ENCODE measurements at regions of chr10 and their contacts with region 1.

Region 1: DNA sequence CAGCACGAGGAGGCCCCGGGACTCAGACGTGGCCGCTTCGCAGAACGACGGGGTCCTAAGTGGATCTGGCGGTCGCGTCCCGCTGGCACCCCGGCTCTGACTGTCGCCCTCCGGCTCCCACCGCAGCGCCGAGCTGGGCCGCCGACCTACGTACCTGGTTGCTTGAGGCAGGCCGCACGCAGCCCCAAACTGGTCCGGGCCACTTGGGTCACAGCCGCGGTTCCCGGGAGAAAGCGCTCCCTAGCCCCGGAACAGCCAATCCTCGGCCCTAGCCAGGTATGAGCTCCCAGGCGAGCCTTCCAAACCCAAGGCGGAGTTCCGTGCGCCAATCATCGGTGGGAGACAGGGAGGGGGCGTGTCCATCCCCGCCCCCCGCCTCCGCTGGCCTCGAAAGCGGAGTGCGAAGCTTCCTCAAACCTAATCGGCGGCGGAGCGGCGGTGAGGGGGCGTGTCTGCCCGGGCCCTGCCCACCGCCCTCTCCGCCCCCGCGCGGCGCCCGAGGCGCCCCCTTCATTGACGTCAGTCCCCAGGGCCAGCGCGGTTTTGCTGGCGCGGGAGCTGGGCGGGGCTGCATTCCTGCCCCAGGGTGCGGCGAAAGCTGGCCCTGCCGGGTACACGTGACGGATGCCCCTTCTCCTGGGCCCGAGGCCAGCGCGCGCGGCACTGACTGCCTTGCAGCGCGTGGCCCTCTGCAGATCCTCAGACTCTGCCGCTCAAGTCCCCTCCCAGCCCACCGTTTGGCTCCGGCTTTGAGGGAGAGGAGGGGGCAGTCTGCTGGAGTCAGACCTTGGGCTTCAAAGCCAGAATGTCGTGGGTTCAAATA is at the start of gene AVPI1:
- DNase-seq: peak; percentile 97
- ATAC-seq: peak; percentile 93
- H3K4me3 Mint-ChIP-seq: peak within 1 kb of the TSS; percentile 81
- H3K27ac Mint-ChIP-seq: peak within 1 kb of the TSS; percentile 69
- H3K4me1 Mint-ChIP-seq: peaks cover 22% of the 10 kb centered on the region
- H3K27me3 Mint-ChIP-seq: no peaks in the 10 kb centered on the region
- CTCF ChIP-seq: no peak
- total RNA-seq, gene AVPI1: 2.5 to 3.0 TPM

Region 2: DNA sequence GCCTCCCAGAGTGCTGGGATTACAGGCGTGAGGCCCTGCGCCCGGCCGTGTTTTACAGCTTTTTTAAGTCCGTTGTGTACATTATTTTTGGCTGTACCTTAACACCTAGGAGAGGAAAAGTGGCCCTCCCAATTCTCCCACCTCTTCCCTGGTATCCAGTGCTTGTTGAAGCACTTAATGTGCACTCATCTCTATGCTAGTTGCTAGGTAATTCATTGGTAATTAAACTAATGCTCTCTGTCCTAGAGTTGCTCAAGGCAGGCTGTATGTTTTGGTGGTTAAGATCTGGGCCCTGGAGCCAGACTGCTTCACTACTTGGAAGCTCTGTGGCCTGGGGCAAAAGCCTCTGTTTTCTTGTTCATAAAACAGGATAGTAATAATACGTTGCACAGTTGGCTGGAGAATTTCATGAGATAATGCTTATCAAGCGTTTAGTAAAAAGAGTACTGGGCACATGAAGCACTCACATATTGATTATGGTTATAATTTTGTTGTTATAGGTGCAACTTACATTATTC is 19.7 kb before region 1 on chr10:
- CTCF ChIA-PET with region 1: interaction called, 10 read pairs
- POLR2A ChIA-PET with region 1: interaction called, 5 read pairs
- intact Hi-C with region 1: no loop called
- DNase-seq: no peak
- ATAC-seq: no peak
- H3K4me3 Mint-ChIP-seq: no peak overlapping the region
- H3K27ac Mint-ChIP-seq: no peak overlapping the region
- H3K4me1 Mint-ChIP-seq: no peaks in the 10 kb centered on the region
- H3K27me3 Mint-ChIP-seq: no peaks in the 10 kb centered on the region
- CTCF ChIP-seq: no peak

Region 3: GRCh38 chr10:97701438-97702069 is 14.4 kb after region 1 on chr10:
- CTCF ChIA-PET with region 1: interaction called, 75 read pairs
- POLR2A ChIA-PET with region 1: interaction called, 8 read pairs
- intact Hi-C with region 1: no loop called
- DNase-seq: peak; percentile 61
- ATAC-seq: peak; percentile 99
- H3K4me3 Mint-ChIP-seq: no peak overlapping the region
- H3K27ac Mint-ChIP-seq: no peak overlapping the region
- H3K4me1 Mint-ChIP-seq: no peaks in the 10 kb centered on the region
- H3K27me3 Mint-ChIP-seq: no peaks in the 10 kb centered on the region
- CTCF ChIP-seq: peak; percentile 89

Region 4: GRCh38 chr10:97724341-97724941 is 37.3 kb after region 1 on chr10:
- CTCF ChIA-PET with region 1: interaction called, 12 read pairs
- POLR2A ChIA-PET with region 1: no interaction called
- intact Hi-C with region 1: no loop called
- DNase-seq: no peak
- ATAC-seq: no peak
- H3K4me3 Mint-ChIP-seq: no peak overlapping the region
- H3K27ac Mint-ChIP-seq: no peak overlapping the region
- H3K4me1 Mint-ChIP-seq: no peaks in the 10 kb centered on the region
- H3K27me3 Mint-ChIP-seq: peaks cover 3% of the 10 kb centered on the region
- CTCF ChIP-seq: no peak

Region 5: DNA sequence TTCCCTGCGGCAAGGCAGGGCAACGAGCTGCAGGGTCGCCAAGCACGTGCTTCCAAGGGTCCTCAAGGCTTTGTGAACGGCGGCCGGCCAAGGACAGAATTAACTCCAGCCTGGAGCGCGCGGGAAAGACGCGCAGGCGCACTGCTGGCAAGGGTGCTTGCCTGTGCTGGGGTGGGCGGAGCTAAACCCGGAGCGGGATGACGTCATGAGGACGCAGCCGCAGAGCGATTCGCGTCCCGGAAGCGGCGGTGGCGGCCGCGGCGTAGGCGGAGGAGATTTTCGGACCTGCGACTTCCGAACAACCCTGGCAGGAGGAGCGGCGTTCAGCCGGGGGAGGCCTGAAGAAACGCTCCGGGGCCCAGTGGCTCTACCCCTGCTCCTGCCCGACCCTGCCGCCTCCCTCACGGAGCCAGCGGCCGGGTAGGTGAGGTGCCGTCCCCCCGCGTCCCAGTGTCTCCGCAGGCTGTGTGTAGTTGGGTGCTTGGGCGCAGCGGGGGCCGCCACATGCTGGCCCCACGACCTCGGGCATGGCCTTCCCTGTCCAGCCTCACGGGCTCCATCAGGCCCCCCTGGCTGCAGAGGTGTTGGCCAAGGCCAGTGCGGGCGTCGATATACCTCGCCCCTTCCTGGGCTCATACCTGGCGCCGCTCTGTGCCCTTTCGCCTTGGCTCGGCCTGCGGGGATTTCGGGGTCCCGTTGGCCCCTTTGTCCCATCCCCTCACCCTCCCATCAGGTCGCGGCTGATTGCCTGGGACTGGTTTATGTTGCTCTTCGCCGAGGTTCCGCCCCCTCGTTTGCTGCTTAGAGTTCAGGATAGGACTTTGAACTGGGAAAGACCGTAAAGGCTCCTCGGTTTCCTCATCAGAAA is 50.0 kb after region 1 on chr10 and contains the start of gene ZFYVE27:
- CTCF ChIA-PET with region 1: interaction called, 34 read pairs
- POLR2A ChIA-PET with region 1: interaction called, 5 read pairs
- intact Hi-C with region 1: no loop called
- DNase-seq: peak; percentile 98
- ATAC-seq: peak; percentile 95
- H3K4me3 Mint-ChIP-seq: peak within 1 kb of the TSS; percentile 85
- H3K27ac Mint-ChIP-seq: peak within 1 kb of the TSS; percentile 93
- H3K4me1 Mint-ChIP-seq: peaks cover 47% of the 10 kb centered on the region
- H3K27me3 Mint-ChIP-seq: no peaks in the 10 kb centered on the region
- CTCF ChIP-seq: no peak
- total RNA-seq, gene ZFYVE27: 18.1 to 20.1 TPM